ENCODE measurements at regions of chr11 and their contacts with region 1.

Region 1: DNA sequence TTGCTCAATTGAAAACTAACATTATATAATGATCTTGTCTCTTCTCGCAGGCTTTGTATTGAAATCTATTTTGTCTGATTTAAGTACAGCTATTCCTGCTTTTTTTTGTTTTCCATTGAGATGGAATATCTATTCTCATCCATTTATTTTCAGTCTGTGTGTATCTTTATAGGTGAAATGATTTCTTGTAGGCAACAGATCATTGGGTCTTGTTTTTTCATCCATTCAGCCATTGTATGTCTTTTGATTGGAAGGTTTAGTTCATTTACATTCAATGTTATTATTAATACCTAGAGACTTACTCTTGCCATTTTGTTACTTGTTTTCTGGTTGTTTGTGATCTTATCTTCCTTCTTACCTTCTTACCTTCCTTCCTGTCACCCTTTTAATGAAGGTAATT is 77.8 kb upstream of the TRPC6 start:
- DNase-seq: no peak
- H3K4me3 ChIP-seq: no peak overlapping the region
- H3K27ac ChIP-seq: no peak overlapping the region
- H3K4me1 ChIP-seq: no peaks in the 10 kb centered on the region
- H3K27me3 ChIP-seq: no peaks in the 10 kb centered on the region
- CTCF ChIP-seq: no peak

Region 2: GRCh38 chr11:100994966-100995365 is 666.6 kb before region 1 on chr11:
- CTCF ChIA-PET with region 1: no interaction called
- dilution Hi-C with region 1: no loop called
- in situ Hi-C with region 1: no loop called
- intact Hi-C with region 1: loop called (anchors 5 kb)
- DNase-seq: peak; percentile 81
- H3K4me3 ChIP-seq: no peak overlapping the region
- H3K27ac ChIP-seq: no peak overlapping the region
- H3K4me1 ChIP-seq: no peaks in the 10 kb centered on the region
- H3K27me3 ChIP-seq: no peaks in the 10 kb centered on the region
- CTCF ChIP-seq: no peak

Region 3: DNA sequence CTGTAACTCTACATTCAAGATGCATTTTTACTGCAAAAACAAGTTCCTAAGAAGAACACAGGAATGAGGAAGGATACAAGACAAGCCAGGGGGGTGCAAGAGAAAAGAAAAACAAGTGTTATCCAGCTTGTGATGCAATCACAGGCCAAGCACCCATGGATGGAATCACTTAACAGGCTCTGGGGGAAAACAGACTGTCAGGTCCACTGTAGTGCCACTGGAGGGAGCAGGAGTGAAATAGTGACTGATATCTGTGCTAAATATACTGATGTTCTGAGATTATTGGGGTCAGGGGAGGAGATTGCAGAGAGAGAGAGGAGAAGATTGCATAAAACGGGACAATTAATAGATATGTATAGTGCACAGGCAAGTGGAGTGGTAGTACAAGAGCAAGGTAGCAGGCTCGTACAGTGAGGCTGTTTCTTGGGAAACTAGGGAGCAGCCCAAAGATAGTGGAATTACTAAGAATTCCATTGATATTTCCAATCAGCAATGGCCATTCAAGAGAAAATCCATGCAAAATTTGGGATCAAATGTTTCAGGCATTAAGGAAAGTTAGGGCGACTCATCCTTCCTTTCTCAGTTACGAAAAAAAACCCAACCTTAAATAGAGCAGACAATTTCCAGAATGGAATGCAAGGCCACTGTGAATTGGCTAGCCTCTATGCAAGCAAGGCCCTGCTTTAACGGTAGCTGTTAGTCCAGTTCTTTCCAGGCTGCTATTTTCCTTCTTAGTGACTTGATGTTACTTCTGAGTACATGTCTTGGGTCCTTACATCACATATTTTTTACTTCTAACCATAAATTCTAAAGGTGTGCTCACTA is 201.1 kb after region 1 on chr11:
- CTCF ChIA-PET with region 1: no interaction called
- dilution Hi-C with region 1: no loop called
- in situ Hi-C with region 1: no loop called
- intact Hi-C with region 1: no loop called
- DNase-seq: peak; percentile 37
- H3K4me3 ChIP-seq: no peak overlapping the region
- H3K27ac ChIP-seq: peak overlapping the region; percentile 9
- H3K4me1 ChIP-seq: peaks cover 29% of the 10 kb centered on the region
- H3K27me3 ChIP-seq: no peaks in the 10 kb centered on the region
- CTCF ChIP-seq: peak; percentile 52 to 58